ENCODE measurements at regions of chr11 and their contacts with region 1.

Region 1: GRCh38 chr11:82906244-82906654 is 4.7 kb downstream of the DDIAS start:
- DNase-seq: no peak
- H3K4me3 ChIP-seq: no peak overlapping the region
- H3K4me3 Mint-ChIP-seq: no peak overlapping the region
- H3K27ac Mint-ChIP-seq: no peak overlapping the region
- H3K4me1 ChIP-seq: no peaks in the 10 kb centered on the region; the same call in 1 of the 2 replicates
- H3K4me1 Mint-ChIP-seq: peaks cover 21% of the 10 kb centered on the region
- H3K27me3 ChIP-seq: no peaks in the 10 kb centered on the region
- H3K27me3 Mint-ChIP-seq: no peaks in the 10 kb centered on the region
- CTCF ChIP-seq: peak; percentile 59 to 75

Region 2: GRCh38 chr11:82927254-82927880 is 21.1 kb after region 1 on chr11:
- CTCF ChIA-PET with region 1: interaction called, 7 read pairs
- POLR2A ChIA-PET with region 1: interaction called, 13 read pairs
- intact Hi-C with region 1: loop called (anchors 1 kb)
- DNase-seq: peak in 1 of 2 experiments; percentile 67
- H3K4me3 ChIP-seq: no peak overlapping the region
- H3K4me3 Mint-ChIP-seq: no peak overlapping the region
- H3K27ac Mint-ChIP-seq: no peak overlapping the region
- H3K4me1 ChIP-seq: no peaks in the 10 kb centered on the region
- H3K4me1 Mint-ChIP-seq: peaks cover 11% of the 10 kb centered on the region
- H3K27me3 ChIP-seq: no peaks in the 10 kb centered on the region
- H3K27me3 Mint-ChIP-seq: no peaks in the 10 kb centered on the region
- CTCF ChIP-seq: peak; percentile 87 to 88

Region 3: GRCh38 chr11:83087035-83087434 is 180.8 kb after region 1 on chr11:
- CTCF ChIA-PET with region 1: no interaction called
- POLR2A ChIA-PET with region 1: interaction called, 3 read pairs
- intact Hi-C with region 1: loop called (anchors 1 kb)
- DNase-seq: peak in 1 of 2 experiments; percentile 28
- H3K4me3 ChIP-seq: no peak overlapping the region
- H3K4me3 Mint-ChIP-seq: no peak overlapping the region
- H3K27ac Mint-ChIP-seq: no peak overlapping the region
- H3K4me1 ChIP-seq: peaks cover 13% of the 10 kb centered on the region
- H3K4me1 Mint-ChIP-seq: peaks cover 48% of the 10 kb centered on the region
- H3K27me3 ChIP-seq: no peaks in the 10 kb centered on the region
- H3K27me3 Mint-ChIP-seq: no peaks in the 10 kb centered on the region
- CTCF ChIP-seq: peak; percentile 51 to 61

Region 4: GRCh38 chr11:83174008-83174407 is 267.8 kb after region 1 on chr11:
- CTCF ChIA-PET with region 1: no interaction called
- POLR2A ChIA-PET with region 1: no interaction called
- intact Hi-C with region 1: loop called (anchors 5 kb)
- DNase-seq: no peak
- H3K4me3 ChIP-seq: no peak overlapping the region
- H3K4me3 Mint-ChIP-seq: no peak overlapping the region
- H3K27ac Mint-ChIP-seq: no peak overlapping the region
- H3K4me1 ChIP-seq: no peaks in the 10 kb centered on the region; the same call in 1 of the 2 replicates
- H3K4me1 Mint-ChIP-seq: peaks cover 17% of the 10 kb centered on the region
- H3K27me3 ChIP-seq: no peaks in the 10 kb centered on the region
- H3K27me3 Mint-ChIP-seq: no peaks in the 10 kb centered on the region
- CTCF ChIP-seq: no peak

Measured in Caco-2 (cell line).